Caco-2 (cell line): ENCODE measurements at regions of chr20 and their contacts with region 1.

Region 1: GRCh38 chr20:63980806-63981728 is at the start of gene PRPF6:
- DNase-seq: peak; percentile 99 to 100
- H3K4me3 ChIP-seq: peak within 1 kb of the TSS; percentile 58
- H3K4me3 Mint-ChIP-seq: peak within 1 kb of the TSS; percentile 90
- H3K27ac Mint-ChIP-seq: peak within 1 kb of the TSS; percentile 65
- H3K4me1 ChIP-seq: peaks cover 31% of the 10 kb centered on the region
- H3K4me1 Mint-ChIP-seq: peaks cover 30% of the 10 kb centered on the region
- H3K27me3 ChIP-seq: no peaks in the 10 kb centered on the region
- H3K27me3 Mint-ChIP-seq: no peaks in the 10 kb centered on the region
- CTCF ChIP-seq: peak; percentile 99 to 100
- total RNA-seq, gene PRPF6: 176 and 181 TPM in 2 replicates

Region 2: GRCh38 chr20:63835021-63835858 is 145.8 kb before region 1 on chr20:
- CTCF ChIA-PET with region 1: no interaction called
- POLR2A ChIA-PET with region 1: no interaction called
- intact Hi-C with region 1: no loop called
- DNase-seq: peak; percentile 95 to 98
- H3K4me3 ChIP-seq: no peak overlapping the region
- H3K4me3 Mint-ChIP-seq: no peak overlapping the region
- H3K27ac Mint-ChIP-seq: peak overlapping the region; percentile 45
- H3K4me1 ChIP-seq: peaks cover 27% of the 10 kb centered on the region
- H3K4me1 Mint-ChIP-seq: peaks cover 16% of the 10 kb centered on the region
- H3K27me3 ChIP-seq: peaks cover 2% of the 10 kb centered on the region; the same call in 1 of the 2 replicates
- H3K27me3 Mint-ChIP-seq: no peaks in the 10 kb centered on the region
- CTCF ChIP-seq: no peak

Region 3: GRCh38 chr20:63911176-63911575 is 69.9 kb before region 1 on chr20:
- CTCF ChIA-PET with region 1: no interaction called
- POLR2A ChIA-PET with region 1: no interaction called
- intact Hi-C with region 1: loop called (anchors 1 kb)
- DNase-seq: no peak
- H3K4me3 ChIP-seq: no peak overlapping the region
- H3K4me3 Mint-ChIP-seq: no peak overlapping the region
- H3K27ac Mint-ChIP-seq: no peak overlapping the region
- H3K4me1 ChIP-seq: peaks cover 30% of the 10 kb centered on the region
- H3K4me1 Mint-ChIP-seq: peaks cover 37% of the 10 kb centered on the region
- H3K27me3 ChIP-seq: no peaks in the 10 kb centered on the region
- H3K27me3 Mint-ChIP-seq: no peaks in the 10 kb centered on the region
- CTCF ChIP-seq: no peak

Region 4: DNA sequence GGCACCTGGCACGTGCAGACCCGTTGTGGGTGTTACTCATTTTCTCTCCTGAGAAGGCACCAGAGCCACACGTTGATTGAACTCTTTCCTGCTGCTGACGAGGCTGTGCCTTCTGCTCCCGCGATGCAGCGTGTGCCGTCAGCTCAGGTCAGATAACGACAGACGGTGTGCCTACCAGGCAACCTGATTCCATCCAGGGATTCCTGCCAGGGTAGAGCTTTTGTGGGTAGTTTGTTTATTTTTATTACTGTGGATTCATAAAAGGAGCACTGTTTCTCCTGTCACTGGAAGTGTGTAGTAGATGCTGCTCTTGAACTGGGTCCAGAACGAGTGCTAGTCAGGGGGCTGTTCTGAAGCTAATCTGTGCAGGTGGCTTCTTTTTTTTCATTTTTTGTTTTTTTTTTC is 20.5 kb after region 1 on chr20:
- CTCF ChIA-PET with region 1: interaction called, 20 read pairs
- POLR2A ChIA-PET with region 1: interaction called, 5 read pairs
- intact Hi-C with region 1: no loop called
- DNase-seq: no peak
- H3K4me3 ChIP-seq: no peak overlapping the region
- H3K4me3 Mint-ChIP-seq: no peak overlapping the region
- H3K27ac Mint-ChIP-seq: no peak overlapping the region
- H3K4me1 ChIP-seq: peaks cover 14% of the 10 kb centered on the region
- H3K4me1 Mint-ChIP-seq: no peaks in the 10 kb centered on the region
- H3K27me3 ChIP-seq: no peaks in the 10 kb centered on the region
- H3K27me3 Mint-ChIP-seq: no peaks in the 10 kb centered on the region
- CTCF ChIP-seq: no peak

Region 5: DNA sequence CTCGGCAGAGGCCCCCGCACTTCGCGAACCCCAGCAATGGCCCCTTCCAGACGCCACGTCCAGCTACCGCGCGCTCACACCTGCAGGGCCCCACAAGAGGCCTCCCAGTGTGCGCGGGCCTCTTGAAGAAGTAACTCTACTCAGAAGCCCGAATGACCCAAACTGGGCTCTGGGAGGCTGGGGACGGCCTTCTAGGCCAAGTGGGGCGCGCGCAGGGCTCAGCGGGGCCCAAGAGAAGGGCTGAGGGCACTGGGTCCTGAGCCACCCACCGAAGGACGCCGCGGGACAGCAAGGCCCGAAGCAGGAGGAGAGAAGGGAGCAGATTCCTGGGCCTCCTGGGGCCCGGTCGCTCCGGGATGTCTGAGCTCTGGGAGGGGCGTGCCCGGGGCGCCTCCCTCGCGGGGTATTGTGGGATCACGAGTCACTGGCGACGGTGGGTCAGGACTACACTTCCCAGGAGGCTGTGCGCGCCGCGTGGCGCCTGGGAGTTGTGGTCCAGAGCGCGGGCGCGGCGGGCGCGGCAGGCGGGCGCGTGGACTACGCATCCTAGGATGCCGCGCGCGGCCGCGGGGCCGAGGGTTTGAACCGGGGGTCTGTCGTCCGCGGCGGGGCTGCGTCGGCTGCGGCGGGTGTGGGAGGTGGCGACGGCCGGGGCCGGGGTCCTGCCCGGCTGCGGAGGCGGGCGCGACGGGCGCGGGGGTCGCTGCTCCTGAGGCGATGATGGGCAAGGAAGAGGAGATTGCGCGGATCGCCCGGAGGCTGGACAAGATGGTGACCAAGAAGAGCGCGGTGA is 81.7 kb after region 1 on chr20 and contains the start of gene TCEA2:
- CTCF ChIA-PET with region 1: interaction called, 17 read pairs
- POLR2A ChIA-PET with region 1: interaction called, 10 read pairs
- intact Hi-C with region 1: loop called (anchors 2 kb)
- DNase-seq: peak; percentile 99 to 100
- H3K4me3 ChIP-seq: peak within 1 kb of the TSS; percentile 74
- H3K4me3 Mint-ChIP-seq: peak within 1 kb of the TSS; percentile 81
- H3K27ac Mint-ChIP-seq: peak within 1 kb of the TSS; percentile 16
- H3K4me1 ChIP-seq: peaks cover 23% of the 10 kb centered on the region
- H3K4me1 Mint-ChIP-seq: peaks cover 28% of the 10 kb centered on the region
- H3K27me3 ChIP-seq: no peaks in the 10 kb centered on the region
- H3K27me3 Mint-ChIP-seq: no peaks in the 10 kb centered on the region
- CTCF ChIP-seq: no peak
- total RNA-seq, gene TCEA2: 39.9 and 48.3 TPM in 2 replicates